Thyroid gland (tissue), 4 donors: ENCODE measurements at regions of chr4 and their contacts with region 1.

Region 1: DNA sequence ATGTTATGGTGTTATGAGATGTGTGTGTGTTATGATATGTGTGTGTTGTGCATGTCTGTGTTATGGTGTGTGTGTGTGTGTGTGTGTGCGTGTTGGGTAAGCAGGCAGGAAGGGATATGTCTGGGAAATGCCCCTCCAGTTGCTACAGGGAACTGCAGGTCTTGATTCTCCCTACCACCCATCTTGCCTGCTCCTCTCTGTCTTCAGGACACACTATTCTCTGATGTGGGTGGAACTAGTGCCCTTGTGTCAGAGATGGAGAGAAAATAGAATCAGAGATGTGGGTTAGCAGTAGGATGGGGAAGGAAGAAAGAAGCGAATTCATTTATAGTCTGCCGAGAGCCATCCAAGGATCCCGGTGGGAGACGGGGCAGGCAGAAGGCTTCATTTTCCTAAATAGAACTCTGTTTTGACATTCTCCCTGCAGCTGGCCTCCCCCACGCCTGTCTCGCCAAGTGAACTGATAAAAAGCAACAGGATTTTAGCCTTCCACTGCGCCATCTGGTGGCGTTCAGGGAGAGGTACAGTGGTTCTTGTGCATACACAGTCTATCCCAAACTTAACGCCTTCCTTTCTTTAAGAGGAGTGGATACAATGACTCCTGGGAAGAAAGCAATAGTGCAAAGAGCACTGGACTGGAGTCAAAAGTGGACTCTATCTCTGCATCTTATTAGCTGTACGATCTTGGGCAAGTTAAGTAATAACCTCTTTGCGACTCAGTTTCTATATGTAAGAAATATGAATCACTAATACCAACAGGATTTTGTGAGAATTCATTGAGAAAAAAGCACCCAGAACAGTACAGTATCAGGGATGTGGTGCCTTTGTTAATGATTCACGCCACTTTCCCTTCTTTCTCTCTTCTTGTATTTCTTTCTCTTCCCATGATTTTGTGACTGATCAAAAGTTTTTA is 14.1 kb upstream of the MGST2 start:
- DNase-seq: peak; percentile 81 to 85
- H3K4me3 ChIP-seq: no peak overlapping the region
- H3K27ac ChIP-seq: no peak overlapping the region
- H3K4me1 ChIP-seq: peaks cover under 1 to 5% of the 10 kb centered on the region in 2 donors
- H3K27me3 ChIP-seq: no peaks in the 10 kb centered on the region
- CTCF ChIP-seq: peak; percentile 78 to 91 (median 83)
- POLR2A ChIP-seq: no peak

Region 2: DNA sequence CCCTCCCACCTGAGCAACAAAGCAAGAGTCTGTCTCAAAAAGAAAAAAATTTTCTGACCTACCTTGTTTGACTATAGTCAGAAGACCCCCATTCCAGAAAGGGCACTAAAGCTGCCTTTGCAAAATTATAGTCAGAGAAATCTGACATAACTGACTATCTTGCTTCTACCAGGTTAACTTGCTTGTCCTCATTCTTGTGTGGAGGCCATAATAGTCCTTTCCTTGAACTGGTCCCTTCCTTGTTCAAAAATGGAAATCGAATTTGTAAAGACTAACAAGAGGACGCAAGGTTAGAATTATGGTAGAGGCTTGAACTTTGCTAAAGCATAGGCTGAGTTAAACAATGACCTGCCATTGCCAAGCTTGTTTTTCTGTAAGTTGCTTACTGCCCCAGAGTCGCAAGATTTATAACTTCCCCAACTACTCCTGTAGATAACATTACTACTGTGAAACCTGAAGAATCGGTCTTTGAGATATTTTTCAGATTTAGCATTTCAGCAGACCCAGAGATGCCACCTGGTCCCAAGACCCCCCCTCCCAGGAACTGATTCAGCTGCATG is 152.4 kb before region 1 on chr4:
- intact Hi-C with region 1: loop called (anchors 5 kb)
- DNase-seq: no peak
- H3K4me3 ChIP-seq: no peak overlapping the region
- H3K27ac ChIP-seq: no peak overlapping the region
- H3K4me1 ChIP-seq: peaks cover 0 to 4% of the 10 kb centered on the region in 2 donors
- H3K27me3 ChIP-seq: no peaks in the 10 kb centered on the region
- CTCF ChIP-seq: no peak
- POLR2A ChIP-seq: no peak

Region 3: GRCh38 chr4:139606600-139607501 is 44.7 kb before region 1 on chr4:
- intact Hi-C with region 1: loop called (anchors 5 kb)
- DNase-seq: no peak
- H3K4me3 ChIP-seq: no peak overlapping the region
- H3K27ac ChIP-seq: no peak overlapping the region
- H3K4me1 ChIP-seq: no peaks in the 10 kb centered on the region
- H3K27me3 ChIP-seq: no peaks in the 10 kb centered on the region
- CTCF ChIP-seq: peak in 2 of 6 experiments; percentile 9 to 31
- POLR2A ChIP-seq: no peak

Region 4: GRCh38 chr4:139728840-139729239 is 77.3 kb after region 1 on chr4:
- intact Hi-C with region 1: no loop called
- DNase-seq: no peak
- H3K4me3 ChIP-seq: no peak overlapping the region
- H3K27ac ChIP-seq: no peak overlapping the region
- H3K4me1 ChIP-seq: peaks cover 3 to 7% of the 10 kb centered on the region in 2 donors
- H3K27me3 ChIP-seq: no peaks in the 10 kb centered on the region
- CTCF ChIP-seq: no peak
- POLR2A ChIP-seq: no peak